AG04450 (cell line): ENCODE measurements at regions of chr14 and their contacts with region 1.

Region 1: DNA sequence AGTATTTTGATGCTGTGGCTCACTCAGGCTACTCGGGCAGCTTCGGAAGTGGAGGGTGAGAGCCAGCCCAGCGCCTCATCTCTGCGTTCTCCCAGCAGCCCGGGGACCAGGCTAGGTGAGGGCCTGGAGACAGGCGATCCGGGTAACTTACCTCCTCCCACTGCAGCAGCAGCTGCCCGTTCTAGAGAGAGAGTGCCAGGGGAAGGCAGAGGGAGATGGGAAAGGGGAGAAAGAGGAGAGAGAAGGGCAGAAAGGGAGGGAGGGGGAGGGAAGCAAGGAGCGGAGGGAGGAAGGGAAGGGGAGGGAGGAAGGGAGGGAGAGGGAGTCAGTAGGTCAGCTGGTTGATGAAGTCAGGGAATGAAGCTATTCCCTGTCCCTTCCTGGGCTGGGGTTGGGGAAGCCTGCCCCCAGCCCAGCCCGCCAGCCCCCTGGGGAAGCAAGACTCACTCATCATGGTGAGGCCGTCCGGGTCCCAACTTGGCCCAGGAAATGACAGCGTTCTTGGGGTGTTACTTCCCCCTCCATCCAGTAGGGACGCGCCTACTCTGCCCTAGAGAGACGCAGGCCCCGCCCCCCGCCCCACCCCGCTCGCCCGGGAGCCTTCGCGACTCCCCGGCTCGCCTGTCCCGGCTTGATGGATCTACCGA is at the start of gene IFI27L2:
- DNase-seq: peak; percentile 24
- H3K4me3 ChIP-seq: peak within 1 kb of the TSS; percentile 72
- H3K27ac ChIP-seq: peak within 1 kb of the TSS; percentile 54
- H3K27me3 ChIP-seq: peaks cover 3% of the 10 kb centered on the region
- CTCF ChIP-seq: peak; percentile 40
- polyA plus RNA-seq, gene IFI27L2: 81.9 and 122 TPM in 2 replicates

Region 2: DNA sequence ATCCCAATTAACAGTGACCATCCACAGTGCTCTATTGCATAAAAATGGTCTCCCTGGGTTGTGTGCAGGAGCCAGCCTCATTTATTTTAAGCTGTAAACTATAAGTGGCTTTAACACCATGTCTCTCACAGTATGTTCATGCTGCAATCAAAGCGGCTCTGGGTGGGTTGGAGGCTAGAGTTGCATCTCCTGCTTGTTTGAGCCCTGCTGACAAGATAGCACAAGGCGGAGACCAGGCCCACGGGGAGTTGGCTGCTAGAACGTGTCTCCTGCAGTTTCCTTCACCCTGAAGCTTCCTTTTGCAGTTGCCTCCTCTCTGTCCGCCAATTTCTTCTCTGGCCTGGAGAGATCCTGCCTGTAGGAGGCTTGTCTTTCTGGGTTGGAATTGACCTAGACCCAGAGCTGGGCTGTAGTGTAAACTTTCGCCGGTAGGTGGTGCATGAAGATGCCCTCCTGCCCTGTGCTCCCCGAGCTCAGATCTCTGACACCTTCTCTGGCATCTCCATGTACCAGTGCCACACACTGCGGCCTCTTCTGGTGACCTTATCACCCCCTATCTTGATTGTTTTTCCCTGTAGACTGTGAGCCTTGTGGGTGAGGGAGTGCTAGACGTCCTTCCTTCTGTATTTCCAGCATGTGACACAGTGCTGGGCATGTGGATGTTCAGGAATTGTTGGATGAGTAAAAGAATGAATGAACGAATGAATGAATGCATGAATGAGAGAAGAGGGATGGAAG is 92.8 kb before region 1 on chr14:
- CTCF ChIA-PET with region 1: interaction called, 183 read pairs
- POLR2A ChIA-PET with region 1: no interaction called
- DNase-seq: peak; percentile 34
- H3K4me3 ChIP-seq: no peak overlapping the region
- H3K27ac ChIP-seq: no peak overlapping the region
- H3K27me3 ChIP-seq: no peaks in the 10 kb centered on the region
- CTCF ChIP-seq: peak; percentile 84

Region 3: GRCh38 chr14:94051115-94051514 is 78.1 kb before region 1 on chr14:
- CTCF ChIA-PET with region 1: interaction called, 26 read pairs
- POLR2A ChIA-PET with region 1: no interaction called
- DNase-seq: peak; percentile 15
- H3K4me3 ChIP-seq: no peak overlapping the region
- H3K27ac ChIP-seq: no peak overlapping the region
- H3K27me3 ChIP-seq: no peaks in the 10 kb centered on the region
- CTCF ChIP-seq: peak; percentile 57

Region 4: DNA sequence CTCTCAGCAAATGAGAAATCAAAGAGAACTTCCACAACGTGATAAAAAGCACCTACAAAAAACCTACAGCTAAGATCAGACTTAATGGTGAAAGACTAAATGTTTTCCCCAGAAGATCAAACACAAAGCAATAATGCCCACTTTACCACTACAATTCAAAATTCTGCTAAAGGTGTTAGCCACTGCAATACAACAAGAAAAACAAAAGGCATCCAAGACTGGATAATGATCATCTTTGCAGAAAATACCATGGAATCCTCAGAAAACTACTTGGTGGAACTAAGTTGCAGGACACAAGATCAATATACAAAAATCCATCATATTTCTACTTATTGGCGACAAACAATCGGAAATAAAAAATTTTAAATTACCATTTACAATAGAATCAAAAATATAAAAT is 54.7 kb before region 1 on chr14:
- CTCF ChIA-PET with region 1: interaction called, 64 read pairs
- POLR2A ChIA-PET with region 1: no interaction called
- DNase-seq: no peak
- H3K4me3 ChIP-seq: no peak overlapping the region
- H3K27ac ChIP-seq: no peak overlapping the region
- H3K27me3 ChIP-seq: no peaks in the 10 kb centered on the region
- CTCF ChIP-seq: no peak

Region 5: GRCh38 chr14:94110552-94111181 is 18.6 kb before region 1 on chr14 and contains the start of gene IFI27:
- CTCF ChIA-PET with region 1: interaction called, 16 read pairs
- POLR2A ChIA-PET with region 1: no interaction called
- DNase-seq: no peak
- H3K4me3 ChIP-seq: no peak within 1 kb of the TSS
- H3K27ac ChIP-seq: no peak within 1 kb of the TSS
- H3K27me3 ChIP-seq: peaks cover 2% of the 10 kb centered on the region
- CTCF ChIP-seq: no peak
- polyA plus RNA-seq, gene IFI27: 0.94 and 1.4 TPM in 2 replicates

Region 6: GRCh38 chr14:94171208-94171607 is 42.0 kb after region 1 on chr14:
- CTCF ChIA-PET with region 1: interaction called, 14 read pairs
- POLR2A ChIA-PET with region 1: no interaction called
- DNase-seq: no peak
- H3K4me3 ChIP-seq: no peak overlapping the region
- H3K27ac ChIP-seq: no peak overlapping the region
- H3K27me3 ChIP-seq: peaks cover 14% of the 10 kb centered on the region
- CTCF ChIP-seq: no peak

Region 7: DNA sequence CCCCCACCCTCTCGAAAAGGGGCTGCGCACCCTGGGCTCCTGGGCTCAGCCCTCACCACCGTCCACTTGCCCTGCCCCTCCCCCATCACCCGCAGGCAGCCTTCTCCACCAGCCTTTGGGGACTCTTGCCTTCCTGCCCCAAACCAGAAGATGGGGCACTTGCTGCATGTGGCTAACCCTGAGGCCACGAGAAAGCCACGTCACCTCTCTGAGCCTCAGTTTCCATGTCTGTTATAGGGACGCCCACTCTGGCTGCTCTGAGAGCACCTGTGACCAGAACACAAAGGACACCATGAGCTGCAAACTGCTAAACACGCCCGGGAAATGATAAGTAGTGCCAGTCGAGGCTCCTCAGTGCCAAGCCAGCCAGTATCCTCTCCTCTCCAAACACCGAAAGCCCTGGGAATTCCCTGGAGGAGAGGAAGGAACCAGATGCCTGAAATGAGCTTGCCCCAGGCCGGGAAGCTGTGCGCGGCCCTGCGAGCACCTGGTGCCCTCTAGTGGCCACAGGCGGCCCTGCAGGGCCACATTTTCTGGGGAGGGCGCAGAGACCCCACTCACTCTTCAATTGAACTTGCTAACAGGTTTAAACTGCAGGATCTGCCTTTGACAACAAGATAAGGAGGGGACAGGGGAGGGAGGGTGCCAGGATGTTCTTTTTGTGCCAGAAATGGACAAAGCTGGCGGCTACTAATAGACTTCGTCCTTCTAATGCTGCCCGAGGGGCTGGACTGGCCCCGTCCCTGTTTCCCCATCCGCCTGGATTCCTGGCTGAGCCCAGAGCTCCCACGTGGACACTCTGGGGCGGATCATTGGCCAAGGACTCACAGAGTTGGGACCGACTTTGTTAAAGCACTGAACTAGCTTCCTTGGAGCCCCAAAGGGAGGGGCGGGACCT is 357.0 kb after region 1 on chr14:
- CTCF ChIA-PET with region 1: interaction called, 19 read pairs
- POLR2A ChIA-PET with region 1: no interaction called
- DNase-seq: peak; percentile 18
- H3K4me3 ChIP-seq: peak overlapping the region; percentile 23; the same call in 1 of the 2 replicates
- H3K27ac ChIP-seq: no peak overlapping the region
- H3K27me3 ChIP-seq: peaks cover 13% of the 10 kb centered on the region
- CTCF ChIP-seq: peak; percentile 100